ENCODE measurements at regions of chr5 and their contacts with region 1.

Region 1: DNA sequence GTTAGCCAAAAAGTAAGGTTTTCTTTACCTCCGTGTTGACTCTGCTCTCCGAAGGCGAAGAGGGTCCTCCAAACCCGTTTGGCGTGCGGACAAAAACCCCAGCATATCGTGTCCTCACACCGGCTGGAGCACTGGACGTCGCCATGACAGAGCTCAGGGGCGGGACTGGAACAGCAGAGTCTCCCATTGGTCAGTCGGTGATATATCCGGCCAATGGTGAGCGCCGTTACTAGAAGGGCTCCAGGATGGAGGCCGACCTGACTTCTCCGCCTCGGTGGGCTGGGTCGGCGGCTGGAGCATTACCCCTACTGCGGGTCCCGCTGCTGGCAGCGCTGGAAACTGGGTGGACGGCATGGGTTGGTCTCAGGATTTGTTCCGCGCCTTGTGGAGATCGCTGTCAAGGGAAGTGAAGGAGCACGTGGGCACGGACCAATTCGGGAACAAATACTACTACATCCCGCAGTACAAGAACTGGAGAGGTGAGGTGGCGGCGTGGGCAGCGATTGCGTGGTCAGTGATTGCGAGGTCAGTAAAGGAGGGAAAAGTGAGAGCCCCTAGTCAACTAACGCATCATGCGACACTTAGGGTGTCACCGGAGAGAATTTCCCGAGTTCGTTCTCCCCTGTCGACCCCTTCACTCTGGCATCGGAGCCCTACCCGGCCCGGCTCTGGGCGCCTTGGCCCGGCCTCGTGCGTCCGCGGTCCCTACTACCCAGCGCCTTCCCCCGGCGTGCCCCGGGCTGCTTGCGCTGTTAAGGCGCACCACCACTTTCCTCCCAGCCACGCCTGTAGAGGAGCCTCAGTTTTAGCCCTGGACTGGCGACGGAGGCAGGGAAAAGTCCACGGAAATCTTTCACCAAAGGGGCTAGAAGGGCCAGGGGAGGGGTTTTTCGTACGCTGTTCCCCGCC is at the starts of genes ERCC8 and NDUFAF2:
- DNase-seq: peak; percentile 95
- H3K4me3 Mint-ChIP-seq: no peak within 1 kb of the TSS
- H3K27ac Mint-ChIP-seq: no peak within 1 kb of the TSS
- H3K4me1 Mint-ChIP-seq: no peaks in the 10 kb centered on the region
- H3K27me3 Mint-ChIP-seq: no peaks in the 10 kb centered on the region
- CTCF ChIP-seq: no peak
- total RNA-seq, gene ERCC8: 13.7 and 17.2 TPM in 2 replicates
- total RNA-seq, gene NDUFAF2: 120 and 141 TPM in 2 replicates

Region 2: GRCh38 chr5:60163762-60164161 is 781.4 kb before region 1 on chr5:
- CTCF ChIA-PET with region 1: no interaction called
- POLR2A ChIA-PET with region 1: no interaction called
- intact Hi-C with region 1: no loop called
- DNase-seq: no peak
- H3K4me3 Mint-ChIP-seq: no peak overlapping the region
- H3K27ac Mint-ChIP-seq: no peak overlapping the region
- H3K4me1 Mint-ChIP-seq: no peaks in the 10 kb centered on the region
- H3K27me3 Mint-ChIP-seq: peaks cover 57% of the 10 kb centered on the region
- CTCF ChIP-seq: no peak

Region 3: DNA sequence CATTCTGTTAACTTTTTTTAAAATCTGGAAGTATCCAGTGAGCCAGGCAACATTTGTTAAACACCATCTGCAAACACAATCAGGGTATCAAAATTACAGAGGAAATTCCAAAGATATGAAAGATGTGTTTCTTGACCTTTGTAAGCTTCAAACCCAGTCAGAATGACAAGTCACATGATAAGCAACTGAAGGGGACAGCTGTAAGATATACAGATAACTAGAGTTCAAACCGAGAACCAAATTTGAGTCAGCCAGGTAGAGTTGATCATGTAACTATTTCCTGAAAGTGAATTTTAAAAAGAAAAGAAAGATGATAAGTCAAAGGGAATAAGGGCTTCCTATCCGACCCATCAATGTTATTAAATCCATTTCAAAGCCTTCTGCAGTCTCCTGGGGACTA is 441.4 kb before region 1 on chr5:
- CTCF ChIA-PET with region 1: no interaction called
- POLR2A ChIA-PET with region 1: no interaction called
- intact Hi-C with region 1: no loop called
- DNase-seq: no peak
- H3K4me3 Mint-ChIP-seq: no peak overlapping the region
- H3K27ac Mint-ChIP-seq: no peak overlapping the region
- H3K4me1 Mint-ChIP-seq: no peaks in the 10 kb centered on the region
- H3K27me3 Mint-ChIP-seq: peaks cover 63% of the 10 kb centered on the region
- CTCF ChIP-seq: no peak

Region 4: DNA sequence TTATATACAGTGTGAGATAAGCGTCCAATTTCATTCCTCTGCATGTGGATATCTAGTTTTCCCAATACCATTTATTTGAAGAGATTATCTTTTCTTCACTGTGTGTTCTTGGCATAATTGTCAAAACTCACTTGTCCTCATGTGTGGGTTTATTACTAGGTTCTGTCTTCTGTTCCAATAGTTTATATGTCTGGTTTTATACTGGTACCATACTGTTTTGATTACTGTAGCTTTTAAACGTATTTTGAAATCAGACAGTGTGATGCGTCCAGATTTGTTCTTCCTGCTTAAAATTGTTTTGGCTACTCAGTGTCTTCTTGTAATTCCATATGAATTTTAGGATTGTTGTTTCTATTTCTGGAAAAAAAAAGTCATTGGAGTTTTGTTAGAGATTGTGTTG is 10.1 kb after region 1 on chr5:
- CTCF ChIA-PET with region 1: interaction called, 3 read pairs
- POLR2A ChIA-PET with region 1: interaction called, 24 read pairs
- intact Hi-C with region 1: no loop called
- DNase-seq: no peak
- H3K4me3 Mint-ChIP-seq: no peak overlapping the region
- H3K27ac Mint-ChIP-seq: no peak overlapping the region
- H3K4me1 Mint-ChIP-seq: no peaks in the 10 kb centered on the region
- H3K27me3 Mint-ChIP-seq: no peaks in the 10 kb centered on the region
- CTCF ChIP-seq: no peak

Region 5: GRCh38 chr5:60960591-60960990 is 15.4 kb after region 1 on chr5:
- CTCF ChIA-PET with region 1: interaction called, 3 read pairs
- POLR2A ChIA-PET with region 1: interaction called, 24 read pairs
- intact Hi-C with region 1: no loop called
- DNase-seq: peak; percentile 26
- H3K4me3 Mint-ChIP-seq: no peak overlapping the region
- H3K27ac Mint-ChIP-seq: no peak overlapping the region
- H3K4me1 Mint-ChIP-seq: no peaks in the 10 kb centered on the region
- H3K27me3 Mint-ChIP-seq: no peaks in the 10 kb centered on the region
- CTCF ChIP-seq: peak; percentile 48

Region 6: GRCh38 chr5:61004448-61004847 is 59.3 kb after region 1 on chr5:
- CTCF ChIA-PET with region 1: no interaction called
- POLR2A ChIA-PET with region 1: no interaction called
- intact Hi-C with region 1: no loop called
- DNase-seq: no peak
- H3K4me3 Mint-ChIP-seq: no peak overlapping the region
- H3K27ac Mint-ChIP-seq: no peak overlapping the region
- H3K4me1 Mint-ChIP-seq: peaks cover 6% of the 10 kb centered on the region
- H3K27me3 Mint-ChIP-seq: no peaks in the 10 kb centered on the region
- CTCF ChIP-seq: no peak

Region 7: GRCh38 chr5:61055434-61056006 is 110.4 kb after region 1 on chr5:
- CTCF ChIA-PET with region 1: interaction called, 4 read pairs
- POLR2A ChIA-PET with region 1: interaction called, 4 read pairs
- intact Hi-C with region 1: loop called (anchors 5 kb)
- DNase-seq: peak; percentile 51
- H3K4me3 Mint-ChIP-seq: no peak overlapping the region
- H3K27ac Mint-ChIP-seq: no peak overlapping the region
- H3K4me1 Mint-ChIP-seq: peaks cover 33% of the 10 kb centered on the region
- H3K27me3 Mint-ChIP-seq: no peaks in the 10 kb centered on the region
- CTCF ChIP-seq: peak; percentile 60